H1 (cell line): ENCODE measurements at regions of chr1 and their contacts with region 1.

Region 1: DNA sequence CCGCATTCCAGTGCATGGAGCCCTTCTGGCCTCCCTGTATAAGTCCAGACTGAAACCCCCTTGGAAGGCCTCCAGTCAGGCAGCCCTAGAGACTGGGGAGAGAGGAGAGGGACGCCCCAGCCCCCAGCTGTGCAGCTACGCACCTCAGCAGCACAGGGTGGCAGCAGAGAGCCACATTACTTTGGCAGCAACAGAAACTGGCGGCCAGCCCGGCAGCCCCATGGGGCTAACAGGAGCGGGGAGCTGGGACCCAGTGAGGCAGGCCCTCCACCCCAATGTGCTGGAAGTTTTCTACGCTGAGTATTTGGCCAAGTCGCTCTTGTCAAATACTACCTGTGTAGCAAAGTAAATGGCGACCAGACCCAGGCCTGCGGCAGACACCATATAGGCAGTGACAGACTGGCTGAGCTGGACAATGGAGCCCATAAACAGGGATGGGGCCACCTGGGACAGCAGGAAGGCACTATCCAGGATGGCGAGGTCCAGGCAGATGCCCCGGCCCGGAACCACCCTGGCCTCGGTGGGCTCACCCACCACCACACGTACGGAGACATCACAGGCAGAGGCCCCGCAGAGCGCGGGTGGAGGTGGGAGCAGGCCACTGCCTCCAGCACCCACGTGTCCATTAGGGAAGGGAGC is 21.2 kb downstream of the SLC45A3 start:
- DNase-seq: peak in 1 of 2 experiments; percentile 94
- H3K4me3 ChIP-seq: no peak overlapping the region
- H3K27ac ChIP-seq: no peak overlapping the region
- H3K4me1 ChIP-seq: peaks cover 0 to 10% (median 5%) of the 10 kb centered on the region in 4 experiments; a peak in 5 of 7 replicates
- H3K27me3 ChIP-seq: no peaks in the 10 kb centered on the region; a peak in 1 of 7 replicates
- CTCF ChIP-seq: peak; percentile 91 to 97 (median 94)
- EP300 ChIP-seq: no peak
- POLR2A ChIP-seq: no peak
- RAD21 ChIP-seq: peak; percentile 96 to 99

Region 2: DNA sequence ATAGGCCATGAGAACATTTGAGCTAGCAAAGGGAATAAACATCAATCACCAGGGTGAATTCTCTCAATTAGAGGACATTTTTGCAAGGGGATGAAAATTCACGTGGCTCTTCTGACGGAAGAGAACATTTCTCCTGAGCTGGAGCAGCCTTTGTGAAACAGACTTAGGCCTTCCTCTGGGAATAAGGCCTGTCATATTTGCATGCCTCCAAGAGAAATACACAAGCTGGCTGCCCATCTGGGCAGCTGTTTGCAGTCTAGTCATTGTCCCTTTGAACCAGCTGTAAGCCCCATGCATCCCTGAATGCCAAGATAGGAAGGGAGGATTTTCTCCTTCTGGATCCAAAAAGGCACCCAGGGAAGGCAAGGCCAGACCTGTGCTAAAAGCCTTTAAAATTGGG is 242.7 kb before region 1 on chr1:
- CTCF ChIA-PET with region 1: no interaction called
- POLR2A ChIA-PET with region 1: no interaction called
- DNase-seq: no peak
- H3K4me3 ChIP-seq: no peak overlapping the region
- H3K27ac ChIP-seq: no peak overlapping the region
- H3K4me1 ChIP-seq: no peaks in the 10 kb centered on the region
- H3K27me3 ChIP-seq: no peaks in the 10 kb centered on the region
- CTCF ChIP-seq: no peak
- EP300 ChIP-seq: no peak
- POLR2A ChIP-seq: no peak
- RAD21 ChIP-seq: no peak

Region 3: DNA sequence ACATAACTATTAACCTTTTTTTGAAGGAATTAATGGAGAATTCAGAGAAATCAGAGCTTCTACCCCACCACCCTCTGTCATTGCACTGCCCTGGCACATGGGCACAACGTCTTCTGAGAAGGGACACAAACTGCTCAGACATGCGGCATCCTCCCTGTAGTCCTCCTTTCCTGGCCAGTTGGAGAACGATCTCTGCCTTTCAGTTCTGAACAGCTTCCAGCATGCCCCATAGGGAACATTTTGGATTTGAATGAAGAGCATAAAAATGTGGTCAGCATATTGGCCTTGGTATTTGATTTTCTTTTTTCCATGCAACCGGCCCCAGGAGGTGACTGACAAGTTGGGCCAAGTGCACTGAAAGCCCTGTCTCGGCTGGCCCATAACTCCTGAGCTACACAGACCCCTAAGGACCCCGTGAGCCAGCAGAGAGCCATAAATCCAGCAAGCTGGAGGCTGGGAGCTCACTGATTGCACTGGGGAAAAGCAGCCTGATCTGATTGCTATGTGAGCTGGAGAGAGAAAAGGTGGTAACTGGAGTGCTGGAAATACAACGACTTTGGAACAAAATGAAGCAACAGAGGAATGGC is 192.4 kb before region 1 on chr1:
- CTCF ChIA-PET with region 1: no interaction called
- POLR2A ChIA-PET with region 1: no interaction called
- DNase-seq: no peak
- H3K4me3 ChIP-seq: no peak overlapping the region
- H3K27ac ChIP-seq: no peak overlapping the region
- H3K4me1 ChIP-seq: peaks cover 0 to 5% (median 1%) of the 10 kb centered on the region in 4 experiments; a peak in 5 of 7 replicates
- H3K27me3 ChIP-seq: no peaks in the 10 kb centered on the region; a peak in 1 of 7 replicates
- CTCF ChIP-seq: no peak
- EP300 ChIP-seq: no peak
- POLR2A ChIP-seq: no peak
- RAD21 ChIP-seq: no peak

Region 4: GRCh38 chr1:205543411-205544301 is 115.4 kb before region 1 on chr1:
- CTCF ChIA-PET with region 1: interaction called, 14 read pairs
- POLR2A ChIA-PET with region 1: no interaction called
- DNase-seq: peak; percentile 50 to 80
- H3K4me3 ChIP-seq: peak overlapping the region; percentile 12 to 52 (median 28); a peak in 7 of 8 replicates
- H3K27ac ChIP-seq: no peak overlapping the region; the same call in 1 of the 2 replicates
- H3K4me1 ChIP-seq: peaks cover 0 to 14% (median 7%) of the 10 kb centered on the region in 4 experiments; a peak in 5 of 7 replicates
- H3K27me3 ChIP-seq: peaks cover 0 to 26% (median 13%) of the 10 kb centered on the region in 4 experiments; a peak in 6 of 7 replicates
- CTCF ChIP-seq: no peak
- EP300 ChIP-seq: no peak
- POLR2A ChIP-seq: no peak
- RAD21 ChIP-seq: no peak

Region 5: DNA sequence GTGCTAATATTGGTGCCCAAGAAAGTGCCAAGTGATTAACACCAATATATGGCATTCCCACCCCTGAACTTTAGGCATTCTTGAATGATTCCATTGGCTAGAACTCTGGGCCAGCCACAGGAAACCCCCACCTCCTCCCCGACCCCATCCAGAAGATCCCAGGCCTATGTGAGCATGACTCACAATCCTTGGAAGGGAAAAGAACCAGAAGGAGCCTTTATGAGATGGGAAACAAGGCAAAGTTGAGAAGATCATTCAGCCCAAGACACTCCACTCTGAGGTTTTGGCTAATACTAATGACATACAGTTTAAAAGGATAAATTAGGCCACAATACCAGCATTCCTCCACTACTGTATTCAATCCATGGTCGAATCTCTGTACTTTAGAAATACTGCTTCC is 49.0 kb before region 1 on chr1:
- CTCF ChIA-PET with region 1: interaction called, 11 read pairs
- POLR2A ChIA-PET with region 1: no interaction called
- DNase-seq: no peak
- H3K4me3 ChIP-seq: no peak overlapping the region
- H3K27ac ChIP-seq: no peak overlapping the region
- H3K4me1 ChIP-seq: no peaks in the 10 kb centered on the region
- H3K27me3 ChIP-seq: peaks cover 0 to 2% (median 0%) of the 10 kb centered on the region in 4 experiments; a peak in 1 of 7 replicates
- CTCF ChIP-seq: no peak
- EP300 ChIP-seq: no peak
- POLR2A ChIP-seq: no peak
- RAD21 ChIP-seq: no peak

Region 6: DNA sequence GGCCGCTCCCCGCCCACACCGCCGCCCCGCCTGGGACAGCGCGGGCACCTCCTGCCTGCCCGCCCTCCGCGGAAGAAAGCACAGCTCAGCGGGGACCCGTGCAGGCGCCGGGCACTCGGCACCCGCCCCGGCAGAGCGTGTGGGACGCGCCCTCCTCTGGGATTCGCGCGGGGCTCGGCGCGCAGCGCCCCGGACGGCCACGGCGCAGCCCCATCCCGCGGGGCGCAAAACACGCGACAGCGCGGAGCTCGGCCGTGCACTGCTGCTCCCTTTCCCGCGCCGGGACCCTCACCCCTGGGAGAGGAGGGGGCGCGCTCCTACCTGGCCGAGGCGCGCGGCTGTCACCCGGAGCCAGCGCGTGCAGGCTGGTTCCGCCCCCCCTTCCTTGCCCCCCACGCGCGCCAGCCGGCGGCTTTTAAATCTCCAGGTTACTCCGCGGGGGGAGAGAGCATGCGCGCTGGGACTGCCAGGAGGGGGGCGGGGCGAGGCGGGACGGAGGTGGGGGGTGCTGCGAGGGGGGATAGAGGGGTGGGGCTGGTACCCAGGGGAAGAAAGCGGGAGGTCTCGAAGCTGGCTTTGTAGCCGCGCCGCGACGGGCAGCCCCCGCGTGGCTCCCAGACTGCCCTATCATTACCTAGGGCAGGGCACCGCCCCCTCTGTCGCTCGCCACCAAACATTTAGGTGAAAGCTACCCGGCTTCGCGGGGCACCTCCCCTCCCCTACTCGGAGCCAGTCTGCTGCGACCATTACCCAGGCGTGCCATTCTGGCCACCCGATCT is 21.2 kb after region 1 on chr1 and contains the start of gene SLC45A3:
- CTCF ChIA-PET with region 1: interaction called, 378 read pairs
- POLR2A ChIA-PET with region 1: interaction called, 11 read pairs
- DNase-seq: no peak
- H3K4me3 ChIP-seq: peak within 1 kb of the TSS; percentile 63 to 93 (median 72)
- H3K27ac ChIP-seq: peak within 1 kb of the TSS; percentile 48; the same call in 1 of the 2 replicates
- H3K4me1 ChIP-seq: peaks cover 4 to 30% (median 15%) of the 10 kb centered on the region in 4 experiments
- H3K27me3 ChIP-seq: peaks cover 0 to 11% (median 2%) of the 10 kb centered on the region in 4 experiments; a peak in 2 of 7 replicates
- CTCF ChIP-seq: no peak
- EP300 ChIP-seq: no peak
- POLR2A ChIP-seq: peak in 1 of 2 experiments; percentile 31; a peak in 1 of 3 replicates
- RAD21 ChIP-seq: no peak
- total RNA-seq, gene SLC45A3: 12.5 and 13.0 TPM in 2 replicates

Region 7: GRCh38 chr1:205711104-205712020 is 52.3 kb after region 1 on chr1:
- CTCF ChIA-PET with region 1: interaction called, 856 read pairs
- POLR2A ChIA-PET with region 1: interaction called, 241 read pairs
- DNase-seq: no peak
- H3K4me3 ChIP-seq: no peak overlapping the region
- H3K27ac ChIP-seq: peak overlapping the region; percentile 12; the same call in 1 of the 2 replicates
- H3K4me1 ChIP-seq: peaks cover 0 to 3% (median 1%) of the 10 kb centered on the region in 4 experiments; a peak in 2 of 7 replicates
- H3K27me3 ChIP-seq: no peaks in the 10 kb centered on the region
- CTCF ChIP-seq: peak in 2 of 3 experiments; percentile 85 to 86; a peak in 3 of 4 replicates
- EP300 ChIP-seq: no peak
- POLR2A ChIP-seq: no peak
- RAD21 ChIP-seq: peak; percentile 94 to 95

Region 8: GRCh38 chr1:205750138-205751035 is 91.3 kb after region 1 on chr1 and contains the start of gene NUCKS1:
- CTCF ChIA-PET with region 1: interaction called, 12 read pairs
- POLR2A ChIA-PET with region 1: interaction called, 4 read pairs
- DNase-seq: peak; percentile 94 to 97
- H3K4me3 ChIP-seq: peak within 1 kb of the TSS; percentile 94 to 99 (median 96)
- H3K27ac ChIP-seq: peak within 1 kb of the TSS; percentile 95
- H3K4me1 ChIP-seq: peaks cover 0 to 10% (median 4%) of the 10 kb centered on the region in 4 experiments; a peak in 4 of 7 replicates
- H3K27me3 ChIP-seq: no peaks in the 10 kb centered on the region
- CTCF ChIP-seq: no peak; a peak in 1 of 4 replicates
- EP300 ChIP-seq: peak; percentile 11 to 81; a peak in 1 of 3 replicates
- POLR2A ChIP-seq: peak in 1 of 2 experiments; percentile 80; a peak in 2 of 3 replicates
- RAD21 ChIP-seq: no peak
- total RNA-seq, gene NUCKS1: 461 and 492 TPM in 2 replicates

Region 9: GRCh38 chr1:205896320-205896719 is 237.3 kb after region 1 on chr1:
- CTCF ChIA-PET with region 1: no interaction called
- POLR2A ChIA-PET with region 1: no interaction called
- DNase-seq: no peak
- H3K4me3 ChIP-seq: no peak overlapping the region
- H3K27ac ChIP-seq: no peak overlapping the region
- H3K4me1 ChIP-seq: no peaks in the 10 kb centered on the region; a peak in 1 of 7 replicates
- H3K27me3 ChIP-seq: no peaks in the 10 kb centered on the region
- CTCF ChIP-seq: no peak
- EP300 ChIP-seq: no peak
- POLR2A ChIP-seq: no peak
- RAD21 ChIP-seq: no peak